Mucosa of descending colon (tissue), 3 donors: ENCODE measurements at regions of chr1 and their contacts with region 1.

Region 1: DNA sequence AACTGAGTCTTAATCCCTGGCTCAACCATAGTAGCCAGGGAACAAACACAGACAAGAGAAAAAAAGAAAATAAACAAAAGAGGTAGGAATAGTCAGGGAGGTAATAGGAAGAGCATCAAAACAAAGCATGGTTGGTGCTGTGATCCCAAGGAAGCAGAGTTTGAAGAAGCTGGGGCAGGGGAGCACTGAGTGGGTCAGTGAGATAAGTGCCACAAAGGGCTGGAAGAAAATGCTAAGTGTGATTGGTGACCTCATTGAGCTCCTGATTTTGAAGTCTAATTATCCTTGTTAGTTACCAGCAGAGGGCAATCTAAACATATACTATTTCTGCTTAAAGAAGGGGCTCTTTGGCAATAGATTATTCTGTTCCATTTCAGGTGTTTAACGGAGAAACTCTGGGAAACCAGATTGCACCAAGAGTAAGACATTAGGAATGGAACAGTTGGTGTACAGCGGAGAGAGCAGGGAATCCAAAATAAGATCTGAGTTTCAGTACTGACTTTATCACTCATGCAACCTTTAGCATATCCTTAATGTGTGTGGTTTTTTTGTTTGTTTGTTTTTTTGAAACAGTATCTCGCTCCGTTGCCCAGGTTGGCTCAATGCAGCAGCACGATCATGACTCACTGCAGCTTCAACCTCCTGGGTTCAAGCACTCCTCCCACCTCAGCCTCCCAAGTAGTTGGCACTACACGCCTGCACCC is 30.7 kb upstream of the KIAA1614 start:
- DNase-seq: no peak
- ATAC-seq: peak; percentile 38
- H3K4me3 ChIP-seq: no peak overlapping the region
- H3K4me1 ChIP-seq: no peaks in the 10 kb centered on the region
- CTCF ChIP-seq: no peak

Region 2: GRCh38 chr1:180814859-180815587 is 66.9 kb before region 1 on chr1:
- intact Hi-C with region 1: no loop called
- DNase-seq: no peak
- ATAC-seq: no peak
- H3K4me3 ChIP-seq: no peak overlapping the region
- H3K4me1 ChIP-seq: no peaks in the 10 kb centered on the region
- CTCF ChIP-seq: no peak

Region 3: DNA sequence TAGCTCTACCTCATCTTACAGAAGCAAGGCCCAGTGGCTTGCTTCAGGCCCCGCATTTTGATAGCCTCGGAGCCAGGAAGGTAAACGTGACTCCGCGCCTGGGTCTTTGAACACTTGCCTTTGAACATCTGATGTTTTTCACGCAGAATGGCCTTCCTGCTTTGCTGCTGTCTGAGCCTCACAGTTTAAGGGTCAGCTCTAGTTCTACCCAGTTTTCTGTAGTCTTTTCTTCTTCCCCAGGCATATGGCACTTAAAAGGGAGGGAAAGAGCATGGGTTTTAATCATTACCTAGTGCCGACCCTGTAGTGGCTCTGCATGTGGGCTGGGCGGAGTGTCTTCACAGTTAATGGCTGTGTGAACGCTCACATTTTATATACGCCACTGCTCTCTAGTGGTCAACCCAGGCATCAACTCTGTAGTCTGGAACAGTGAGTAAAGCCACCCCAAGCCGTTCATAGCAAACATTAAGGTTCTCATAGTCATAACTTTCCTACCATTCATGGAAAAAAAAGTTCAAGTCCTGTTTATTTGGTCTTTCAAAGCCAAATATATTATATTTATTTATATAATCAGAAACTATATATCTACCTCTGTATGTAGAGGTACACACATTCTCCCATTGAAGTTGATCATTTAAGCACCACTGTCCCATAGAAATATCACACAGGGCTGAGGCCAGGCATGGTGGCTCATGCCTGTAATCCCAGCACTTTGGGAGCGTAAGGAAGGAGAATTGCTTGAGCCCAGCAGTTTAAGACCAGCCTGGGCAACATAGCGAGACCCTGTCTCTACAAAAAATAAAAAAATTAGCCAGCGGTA is 284.6 kb after region 1 on chr1:
- intact Hi-C with region 1: loop called (anchors 10 kb)
- DNase-seq: peak in 2 of 3 donors; percentile 42 to 84
- ATAC-seq: peak; percentile 98
- H3K4me3 ChIP-seq: no peak overlapping the region
- H3K4me1 ChIP-seq: no peaks in the 10 kb centered on the region
- CTCF ChIP-seq: peak; percentile 84